ENCODE measurements at regions of chr16 and their contacts with region 1.

Region 1: DNA sequence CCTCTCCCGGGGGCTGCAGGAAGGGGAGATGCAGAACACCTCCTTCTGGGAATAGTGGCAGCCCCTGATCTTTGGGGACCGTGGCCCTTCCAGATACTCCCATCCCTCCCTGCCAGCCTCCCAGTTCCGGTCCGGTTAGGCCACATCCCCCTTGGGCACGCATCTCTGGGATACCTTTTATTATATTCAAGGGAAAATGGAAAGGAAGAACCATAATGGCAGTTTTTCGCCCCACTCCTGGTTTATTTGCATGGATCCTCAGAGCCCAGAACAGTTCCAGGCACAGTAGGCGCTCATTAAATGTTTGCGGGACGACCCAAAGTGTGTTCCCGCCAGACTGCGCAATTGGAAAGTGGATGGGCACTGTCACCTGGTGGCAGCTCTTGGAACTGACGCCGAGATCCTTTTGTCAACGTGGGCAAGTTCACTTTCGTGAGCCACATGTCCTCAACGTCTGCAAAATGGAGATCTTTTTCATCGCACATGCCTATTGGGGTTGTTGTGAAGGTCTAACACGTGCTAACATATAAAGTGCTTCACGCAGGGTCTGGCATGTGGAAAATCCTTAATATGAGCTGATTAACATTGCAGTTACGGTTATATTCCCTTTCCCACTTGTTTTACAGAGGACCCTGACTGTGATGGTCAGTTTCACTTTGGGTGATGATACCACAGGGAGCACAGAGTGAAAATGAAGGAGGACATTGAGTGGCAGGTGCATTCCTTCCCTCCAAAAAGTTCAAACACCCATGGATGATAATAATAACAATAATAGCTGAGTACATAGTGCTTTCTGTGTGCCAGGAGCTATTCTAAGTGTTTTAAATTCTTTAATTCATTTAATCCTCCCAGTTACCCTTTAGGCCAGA is 1.7 kb upstream of the GPRC5B start:
- DNase-seq: peak; percentile 76
- H3K4me3 Mint-ChIP-seq: peak overlapping the region; percentile 60
- H3K27ac Mint-ChIP-seq: no peak overlapping the region
- H3K4me1 Mint-ChIP-seq: peaks cover 4% of the 10 kb centered on the region
- H3K27me3 Mint-ChIP-seq: peaks cover 12% of the 10 kb centered on the region
- CTCF ChIP-seq: peak; percentile 98

Region 2: DNA sequence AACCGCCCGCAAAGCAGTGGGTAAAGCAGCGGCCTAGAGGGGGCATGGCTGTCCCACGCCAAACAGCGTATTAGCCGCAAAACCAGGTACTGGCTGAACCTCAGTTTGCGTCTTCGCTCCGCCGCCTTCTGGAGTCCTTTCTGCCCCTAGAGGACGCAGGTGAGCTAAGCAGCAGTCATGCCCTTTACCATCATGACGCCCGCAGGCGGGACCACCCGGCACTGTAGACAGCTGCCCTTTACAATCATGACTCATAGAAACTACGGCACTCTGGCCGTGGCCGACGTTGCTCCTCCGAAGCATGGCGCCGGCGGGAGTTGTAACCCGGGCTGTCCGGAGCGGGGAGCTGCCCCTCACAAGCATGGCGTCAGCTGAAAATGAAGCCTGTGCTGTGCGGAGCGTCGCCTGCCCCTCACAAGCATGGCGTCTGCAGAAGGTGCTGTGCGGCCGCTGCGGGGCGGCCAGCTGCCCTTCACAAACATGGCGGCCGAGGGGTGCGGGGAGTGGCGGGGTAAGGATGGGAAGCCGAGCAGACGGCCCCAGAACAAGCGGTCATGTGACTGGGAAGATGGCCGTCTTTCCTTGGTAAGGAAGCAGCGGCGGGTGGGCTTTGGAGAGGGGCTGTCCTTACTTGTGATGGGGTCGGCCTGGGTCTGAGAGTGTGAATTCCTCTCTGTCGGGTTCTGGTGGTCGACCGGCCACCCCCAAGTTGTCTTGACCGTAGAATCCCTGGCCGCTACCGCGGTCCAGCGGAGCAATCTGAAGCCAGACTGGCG is 331.0 kb before region 1 on chr16 and contains the start of gene VPS35L:
- CTCF ChIA-PET with region 1: interaction called, 23 read pairs
- POLR2A ChIA-PET with region 1: no interaction called
- intact Hi-C with region 1: loop called (anchors 1 kb)
- DNase-seq: peak; percentile 96
- H3K4me3 Mint-ChIP-seq: peak within 1 kb of the TSS; percentile 90
- H3K27ac Mint-ChIP-seq: peak within 1 kb of the TSS; percentile 96
- H3K4me1 Mint-ChIP-seq: peaks cover 8% of the 10 kb centered on the region
- H3K27me3 Mint-ChIP-seq: no peaks in the 10 kb centered on the region
- CTCF ChIP-seq: peak; percentile 51
- total RNA-seq, gene VPS35L: 50.2 and 55.5 TPM in 2 replicates

Region 3: DNA sequence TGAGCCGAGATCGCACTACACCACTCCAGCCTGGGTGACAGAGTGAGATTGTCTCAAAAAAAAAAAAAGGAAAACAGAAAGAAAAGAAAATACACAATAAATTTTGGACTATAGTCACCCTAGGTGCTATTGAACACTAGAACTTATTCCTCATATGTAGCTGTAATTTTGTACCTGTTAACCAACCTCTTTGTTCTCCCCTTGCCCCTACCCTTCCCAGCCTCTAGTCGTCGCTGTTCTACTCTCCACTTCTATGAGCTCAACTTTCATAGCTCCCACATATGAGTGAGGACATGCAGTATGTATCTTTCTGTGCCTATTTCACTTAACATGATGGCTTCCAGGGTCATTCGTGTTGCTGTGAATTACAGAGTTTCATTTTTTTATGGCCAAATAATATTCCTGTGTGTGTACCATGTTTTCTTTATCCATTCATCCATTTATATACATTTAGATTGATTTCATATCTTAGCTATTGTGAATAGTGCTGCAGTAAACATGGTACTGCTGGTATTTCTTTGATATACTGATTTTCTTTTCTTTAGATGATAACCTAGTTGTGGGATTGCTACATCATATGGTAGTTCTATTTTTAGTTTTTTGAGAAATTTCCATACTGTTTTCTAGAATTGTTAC is 302.5 kb before region 1 on chr16:
- CTCF ChIA-PET with region 1: interaction called, 41 read pairs
- POLR2A ChIA-PET with region 1: no interaction called
- intact Hi-C with region 1: loop called (anchors 5 kb)
- DNase-seq: peak; percentile 70
- H3K4me3 Mint-ChIP-seq: no peak overlapping the region
- H3K27ac Mint-ChIP-seq: no peak overlapping the region
- H3K4me1 Mint-ChIP-seq: no peaks in the 10 kb centered on the region
- H3K27me3 Mint-ChIP-seq: no peaks in the 10 kb centered on the region
- CTCF ChIP-seq: peak; percentile 93

Region 4: GRCh38 chr16:19607616-19608280 is 278.6 kb before region 1 on chr16:
- CTCF ChIA-PET with region 1: interaction called, 184 read pairs
- POLR2A ChIA-PET with region 1: no interaction called
- intact Hi-C with region 1: no loop called
- DNase-seq: no peak
- H3K4me3 Mint-ChIP-seq: no peak overlapping the region
- H3K27ac Mint-ChIP-seq: no peak overlapping the region
- H3K4me1 Mint-ChIP-seq: no peaks in the 10 kb centered on the region
- H3K27me3 Mint-ChIP-seq: no peaks in the 10 kb centered on the region
- CTCF ChIP-seq: no peak

Region 5: GRCh38 chr16:19874851-19875546 is 11.3 kb before region 1 on chr16:
- CTCF ChIA-PET with region 1: interaction called, 24 read pairs
- POLR2A ChIA-PET with region 1: no interaction called
- intact Hi-C with region 1: no loop called
- DNase-seq: no peak
- H3K4me3 Mint-ChIP-seq: no peak overlapping the region
- H3K27ac Mint-ChIP-seq: no peak overlapping the region
- H3K4me1 Mint-ChIP-seq: peaks cover 6% of the 10 kb centered on the region
- H3K27me3 Mint-ChIP-seq: no peaks in the 10 kb centered on the region
- CTCF ChIP-seq: no peak

Region 6: GRCh38 chr16:20004932-20005331 is 118.6 kb after region 1 on chr16:
- CTCF ChIA-PET with region 1: no interaction called
- POLR2A ChIA-PET with region 1: no interaction called
- intact Hi-C with region 1: no loop called
- DNase-seq: no peak
- H3K4me3 Mint-ChIP-seq: no peak overlapping the region
- H3K27ac Mint-ChIP-seq: no peak overlapping the region
- H3K4me1 Mint-ChIP-seq: no peaks in the 10 kb centered on the region
- H3K27me3 Mint-ChIP-seq: no peaks in the 10 kb centered on the region
- CTCF ChIP-seq: no peak

Region 7: DNA sequence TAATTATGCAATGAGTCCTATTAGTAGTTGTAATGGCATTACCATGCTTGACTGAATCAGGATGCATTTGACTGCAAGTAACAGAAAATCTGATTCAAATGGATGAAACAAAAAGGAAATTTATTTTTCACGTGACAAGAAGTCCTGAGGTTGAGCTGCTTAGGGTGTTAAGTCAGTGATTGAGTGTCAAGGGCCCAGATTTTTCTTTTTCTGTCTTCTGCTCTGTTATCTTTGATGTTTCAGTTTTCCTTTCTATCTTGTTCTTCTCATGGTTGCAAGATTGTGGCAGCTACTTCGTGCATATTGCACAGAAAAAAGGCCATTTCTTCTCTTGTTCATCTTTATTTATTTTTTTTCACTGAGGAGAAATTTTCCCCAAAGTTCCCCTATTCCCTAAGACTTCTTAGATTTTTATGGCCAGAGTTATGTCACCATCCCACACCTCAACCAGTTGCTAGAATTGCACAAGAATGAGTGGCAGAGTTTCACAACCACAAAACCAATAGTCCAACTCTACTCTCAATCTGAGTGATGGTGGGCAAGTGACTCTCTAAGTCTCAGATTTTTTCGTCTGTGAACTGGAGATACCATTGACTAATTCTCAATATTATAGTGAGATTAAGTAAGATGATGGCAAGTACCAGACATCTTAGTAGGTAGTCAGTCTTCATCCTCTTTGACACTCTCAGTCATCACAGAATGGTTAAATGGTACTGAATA is 203.1 kb after region 1 on chr16:
- CTCF ChIA-PET with region 1: no interaction called
- POLR2A ChIA-PET with region 1: no interaction called
- intact Hi-C with region 1: no loop called
- DNase-seq: no peak
- H3K4me3 Mint-ChIP-seq: no peak overlapping the region
- H3K27ac Mint-ChIP-seq: no peak overlapping the region
- H3K4me1 Mint-ChIP-seq: no peaks in the 10 kb centered on the region
- H3K27me3 Mint-ChIP-seq: peaks cover 38% of the 10 kb centered on the region
- CTCF ChIP-seq: no peak